ENCODE measurements at regions of chr15 and their contacts with region 1.

Region 1: GRCh38 chr15:99250494-99251435 is 516 bp upstream of the LRRC28 start:
- DNase-seq: peak; percentile 96
- ATAC-seq: peak; percentile 99
- H3K4me3 Mint-ChIP-seq: peak overlapping the region; percentile 89
- H3K27ac Mint-ChIP-seq: peak overlapping the region; percentile 81
- H3K4me1 Mint-ChIP-seq: peaks cover 23% of the 10 kb centered on the region
- H3K27me3 Mint-ChIP-seq: peaks cover 2% of the 10 kb centered on the region

Region 2: DNA sequence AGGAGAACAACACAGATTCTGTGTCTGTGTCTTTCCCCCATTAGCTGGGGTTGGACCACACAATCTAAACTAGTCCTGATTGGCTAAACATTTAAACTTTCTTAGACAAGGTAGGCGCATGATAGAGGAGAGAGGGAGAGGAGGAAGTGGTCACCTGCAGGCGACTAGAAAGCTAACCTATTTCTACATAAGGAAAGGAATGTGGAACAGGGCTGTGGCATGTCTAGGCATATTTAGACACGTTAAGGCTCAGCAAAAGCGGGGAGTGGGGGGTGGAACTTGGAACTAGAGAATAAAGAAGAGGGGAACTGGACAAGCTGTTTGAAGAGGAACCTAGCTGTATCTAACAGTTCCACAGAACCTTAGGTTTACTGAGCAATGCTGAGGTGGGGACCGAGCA is 13.4 kb after region 1 on chr15:
- POLR2A ChIA-PET with region 1: interaction called, 12 read pairs
- DNase-seq: no peak
- ATAC-seq: no peak
- H3K4me3 Mint-ChIP-seq: no peak overlapping the region
- H3K27ac Mint-ChIP-seq: no peak overlapping the region
- H3K4me1 Mint-ChIP-seq: peaks cover 18% of the 10 kb centered on the region
- H3K27me3 Mint-ChIP-seq: no peaks in the 10 kb centered on the region

Region 3: GRCh38 chr15:99275525-99276128 is 24.9 kb after region 1 on chr15:
- POLR2A ChIA-PET with region 1: no interaction called
- DNase-seq: no peak
- ATAC-seq: no peak
- H3K4me3 Mint-ChIP-seq: no peak overlapping the region
- H3K27ac Mint-ChIP-seq: no peak overlapping the region
- H3K4me1 Mint-ChIP-seq: peaks cover 20% of the 10 kb centered on the region
- H3K27me3 Mint-ChIP-seq: peaks cover 1% of the 10 kb centered on the region

Region 4: DNA sequence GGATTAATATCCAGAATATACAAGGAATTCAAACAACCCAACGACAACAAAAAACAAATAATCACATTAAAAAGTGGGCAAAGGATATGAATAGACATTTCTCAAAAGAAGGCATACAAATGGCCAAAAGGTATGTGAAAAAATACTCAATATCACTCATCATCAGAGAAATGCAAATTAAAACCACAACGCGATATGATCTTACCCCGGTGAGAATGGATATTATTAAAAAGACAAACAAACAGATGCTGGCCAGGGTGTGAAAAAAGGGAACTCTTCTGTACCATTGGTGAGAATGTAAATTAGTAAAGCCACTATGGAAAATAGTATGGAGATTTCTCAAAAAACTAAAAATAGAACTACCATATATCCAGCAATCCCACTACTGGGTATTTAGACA is 271.5 kb after region 1 on chr15:
- POLR2A ChIA-PET with region 1: no interaction called
- DNase-seq: no peak
- ATAC-seq: no peak
- H3K4me3 Mint-ChIP-seq: no peak overlapping the region
- H3K27ac Mint-ChIP-seq: no peak overlapping the region
- H3K4me1 Mint-ChIP-seq: peaks cover 8% of the 10 kb centered on the region
- H3K27me3 Mint-ChIP-seq: peaks cover 4% of the 10 kb centered on the region

Region 5: GRCh38 chr15:99733268-99734039 is 482.7 kb after region 1 on chr15 and contains the start of gene LYSMD4:
- POLR2A ChIA-PET with region 1: interaction called, 16 read pairs
- DNase-seq: peak; percentile 96
- ATAC-seq: peak; percentile 100
- H3K4me3 Mint-ChIP-seq: peak within 1 kb of the TSS; percentile 86
- H3K27ac Mint-ChIP-seq: peak within 1 kb of the TSS; percentile 95
- H3K4me1 Mint-ChIP-seq: peaks cover 20% of the 10 kb centered on the region
- H3K27me3 Mint-ChIP-seq: no peaks in the 10 kb centered on the region
- total RNA-seq, gene LYSMD4: 11.6 to 12.6 TPM